ENCODE measurements at regions of chr2 and their contacts with region 1.

Region 1: DNA sequence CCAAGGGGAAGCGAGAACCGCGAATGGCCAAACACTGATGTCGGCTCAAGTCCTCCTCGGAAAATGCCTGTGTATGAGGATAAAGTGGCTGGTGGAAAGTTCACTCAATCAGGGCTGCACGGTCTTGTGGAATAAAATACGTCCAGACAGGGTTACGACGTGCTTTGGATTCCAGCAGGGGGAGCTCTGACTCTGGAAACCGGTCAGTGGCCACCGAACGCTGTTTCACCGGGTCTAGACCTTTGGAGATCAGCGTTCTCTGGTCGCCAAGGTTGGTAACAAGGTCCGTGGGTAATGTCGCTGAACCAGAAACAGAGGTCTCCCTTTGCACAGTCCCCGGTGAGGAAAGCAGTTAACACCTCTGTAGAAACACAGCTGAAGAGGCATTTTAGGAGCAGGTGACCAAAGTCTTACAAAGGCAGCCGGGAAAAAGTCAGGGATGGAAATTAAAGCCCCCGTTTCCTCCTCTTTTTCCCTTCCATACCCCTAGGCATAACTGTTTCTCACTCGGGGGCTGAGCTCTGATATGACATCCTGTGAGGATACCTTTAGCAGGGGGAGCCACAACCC is 47.8 kb downstream of the CDCA7 start:
- DNase-seq: peak; percentile 24 to 85
- H3K4me3 ChIP-seq: peak overlapping the region in 1 of 2 donors; percentile 20
- H3K27ac ChIP-seq: no peak overlapping the region
- H3K4me1 ChIP-seq: peaks cover 0 to 6% of the 10 kb centered on the region in 2 donors
- H3K27me3 ChIP-seq: no peaks in the 10 kb centered on the region
- CTCF ChIP-seq: peak; percentile 81 to 85 (median 84)

Region 2: DNA sequence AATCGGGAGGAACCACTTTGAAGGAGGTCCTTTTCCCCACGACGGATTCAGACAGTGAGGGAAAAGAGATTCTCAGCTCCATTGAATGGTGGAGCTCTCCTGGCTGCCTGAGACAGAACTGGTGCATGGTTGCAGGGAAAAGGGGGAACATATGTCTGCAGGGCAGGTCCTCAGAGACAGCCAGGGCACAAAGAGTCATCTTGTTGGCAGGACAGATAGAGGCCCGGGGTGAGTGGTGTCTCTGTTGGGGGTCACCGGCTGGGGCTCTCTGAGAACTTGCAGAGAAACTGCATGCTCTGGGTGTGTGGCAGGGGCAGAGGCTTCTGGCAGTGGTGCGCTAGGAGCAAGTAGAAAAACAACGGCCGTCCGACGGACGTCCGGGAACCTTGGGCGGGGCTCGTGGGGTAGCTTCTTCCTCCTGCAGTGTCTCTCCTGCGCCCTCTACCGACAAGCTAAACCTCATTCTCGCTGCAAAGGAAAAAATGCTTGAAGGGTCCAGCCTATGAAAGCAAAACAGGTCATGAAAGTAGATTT is 46.5 kb after region 1 on chr2:
- intact Hi-C with region 1: loop called (anchors 2 kb)
- DNase-seq: peak in 1 of 2 donors; percentile 75
- H3K4me3 ChIP-seq: peak overlapping the region; percentile 37 to 39
- H3K27ac ChIP-seq: no peak overlapping the region
- H3K4me1 ChIP-seq: no peaks in the 10 kb centered on the region
- H3K27me3 ChIP-seq: no peaks in the 10 kb centered on the region
- CTCF ChIP-seq: peak; percentile 18 to 67 (median 58)

Region 3: GRCh38 chr2:174078275-174078674 is 675.8 kb after region 1 on chr2:
- intact Hi-C with region 1: loop called (anchors 10 kb)
- DNase-seq: no peak
- H3K4me3 ChIP-seq: no peak overlapping the region
- H3K27ac ChIP-seq: no peak overlapping the region
- H3K4me1 ChIP-seq: no peaks in the 10 kb centered on the region
- H3K27me3 ChIP-seq: no peaks in the 10 kb centered on the region
- CTCF ChIP-seq: peak; percentile 15 to 45 (median 19)

Measured in ascending aorta (tissue), 2 donors.